ENCODE measurements at regions of chr6 and their contacts with region 1.

Region 1: DNA sequence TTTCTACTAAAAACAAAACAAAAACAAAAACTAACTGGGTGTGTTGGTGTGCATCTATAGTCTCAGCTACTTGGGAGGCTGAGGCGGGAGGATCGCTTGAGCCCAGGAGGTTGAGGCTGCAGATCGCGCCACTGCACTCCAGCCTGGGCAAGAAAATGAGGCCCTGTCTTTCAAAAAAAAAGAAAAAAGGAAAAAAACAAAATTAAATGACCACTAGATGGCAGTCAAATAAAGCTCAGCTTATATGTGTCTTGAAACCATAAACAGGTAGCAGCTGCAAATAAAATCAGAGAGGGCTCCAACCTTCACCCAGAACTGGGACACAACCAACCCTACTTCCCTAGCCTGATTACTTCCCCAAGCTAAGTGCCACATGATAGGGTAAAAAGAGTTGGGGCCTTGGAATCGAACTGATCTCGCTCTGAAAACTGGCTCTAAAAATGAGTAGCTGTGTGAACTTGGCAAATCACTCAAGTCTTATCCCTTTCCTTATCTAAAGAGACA is 67.1 kb upstream of the ADGRF4 start:
- DNase-seq: peak; percentile 66
- ATAC-seq: peak; percentile 59
- H3K4me3 ChIP-seq: peak overlapping the region in 2 of 3 experiments; percentile 5 to 42; a peak in 3 of 6 replicates
- H3K27ac ChIP-seq: no peak overlapping the region
- H3K4me1 ChIP-seq: peaks cover 31% of the 10 kb centered on the region
- H3K27me3 ChIP-seq: 0 out of 5 replicates have a peak, but pooled peaks cover 0 to 4% of the 10 kb centered on the region in 2 experiments
- CTCF ChIP-seq: peak; percentile 73
- EP300 ChIP-seq: no peak
- POLR2A ChIP-seq: no peak
- RAD21 ChIP-seq: peak; percentile 68; the same call in 1 of the 2 replicates

Region 2: GRCh38 chr6:47111685-47112084 is 519.6 kb before region 1 on chr6:
- CTCF ChIA-PET with region 1: no interaction called
- POLR2A ChIA-PET with region 1: no interaction called
- in situ Hi-C with region 1: no loop called
- intact Hi-C with region 1: no loop called
- DNase-seq: peak; percentile 93
- ATAC-seq: peak; percentile 79
- H3K4me3 ChIP-seq: peak overlapping the region in 1 of 3 experiments; percentile 15; a peak in 1 of 6 replicates
- H3K27ac ChIP-seq: peak overlapping the region; percentile 4
- H3K4me1 ChIP-seq: peaks cover 44% of the 10 kb centered on the region
- H3K27me3 ChIP-seq: no peaks in the 10 kb centered on the region
- CTCF ChIP-seq: no peak
- EP300 ChIP-seq: peak in 1 of 2 experiments; percentile 54; a peak in 1 of 4 replicates
- POLR2A ChIP-seq: no peak
- RAD21 ChIP-seq: no peak

Region 3: DNA sequence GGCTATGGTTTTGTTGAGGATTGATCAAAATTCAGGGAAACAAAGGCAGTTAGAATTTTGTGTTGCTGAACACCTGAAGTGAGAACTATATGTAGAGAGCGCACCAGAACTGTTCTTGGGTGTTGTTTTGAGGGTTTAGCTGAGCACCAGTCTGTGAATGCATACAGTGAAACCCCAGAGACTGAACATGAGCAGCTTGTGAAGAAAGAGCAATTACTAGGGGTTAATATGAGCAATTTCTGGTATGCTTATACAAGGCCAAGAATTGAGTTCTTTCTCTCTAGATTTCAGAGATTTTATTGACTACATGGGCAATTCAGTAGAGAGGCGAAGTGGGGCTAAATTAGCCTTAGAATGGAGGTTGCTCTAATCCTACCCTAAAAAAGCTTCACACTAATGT is 59.8 kb before region 1 on chr6:
- CTCF ChIA-PET with region 1: no interaction called
- POLR2A ChIA-PET with region 1: no interaction called
- in situ Hi-C with region 1: no loop called
- intact Hi-C with region 1: no loop called
- DNase-seq: no peak
- ATAC-seq: no peak
- H3K4me3 ChIP-seq: no peak overlapping the region
- H3K27ac ChIP-seq: no peak overlapping the region
- H3K4me1 ChIP-seq: no peaks in the 10 kb centered on the region
- H3K27me3 ChIP-seq: no peaks in the 10 kb centered on the region
- CTCF ChIP-seq: no peak
- EP300 ChIP-seq: no peak
- POLR2A ChIP-seq: no peak
- RAD21 ChIP-seq: no peak

Region 4: GRCh38 chr6:47733879-47734558 is 102.7 kb after region 1 on chr6:
- CTCF ChIA-PET with region 1: interaction called, 13 read pairs
- POLR2A ChIA-PET with region 1: no interaction called
- in situ Hi-C with region 1: no loop called
- intact Hi-C with region 1: loop called (anchors 1 kb)
- DNase-seq: peak; percentile 28
- ATAC-seq: peak; percentile 73
- H3K4me3 ChIP-seq: no peak overlapping the region
- H3K27ac ChIP-seq: no peak overlapping the region
- H3K4me1 ChIP-seq: no peaks in the 10 kb centered on the region
- H3K27me3 ChIP-seq: no peaks in the 10 kb centered on the region
- CTCF ChIP-seq: peak; percentile 59
- EP300 ChIP-seq: no peak
- POLR2A ChIP-seq: no peak
- RAD21 ChIP-seq: no peak

Region 5: GRCh38 chr6:47780510-47781356 is 149.4 kb after region 1 on chr6:
- CTCF ChIA-PET with region 1: interaction called, 37 read pairs
- POLR2A ChIA-PET with region 1: no interaction called
- in situ Hi-C with region 1: loop called (anchors 5 kb)
- intact Hi-C with region 1: loop called (anchors 1 kb)
- DNase-seq: peak; percentile 62
- ATAC-seq: peak; percentile 98
- H3K4me3 ChIP-seq: no peak overlapping the region
- H3K27ac ChIP-seq: no peak overlapping the region
- H3K4me1 ChIP-seq: no peaks in the 10 kb centered on the region
- H3K27me3 ChIP-seq: peaks cover 0 to 6% of the 10 kb centered on the region in 2 experiments; a peak in 1 of 5 replicates
- CTCF ChIP-seq: peak; percentile 82
- EP300 ChIP-seq: no peak
- POLR2A ChIP-seq: no peak
- RAD21 ChIP-seq: peak; percentile 50

Region 6: DNA sequence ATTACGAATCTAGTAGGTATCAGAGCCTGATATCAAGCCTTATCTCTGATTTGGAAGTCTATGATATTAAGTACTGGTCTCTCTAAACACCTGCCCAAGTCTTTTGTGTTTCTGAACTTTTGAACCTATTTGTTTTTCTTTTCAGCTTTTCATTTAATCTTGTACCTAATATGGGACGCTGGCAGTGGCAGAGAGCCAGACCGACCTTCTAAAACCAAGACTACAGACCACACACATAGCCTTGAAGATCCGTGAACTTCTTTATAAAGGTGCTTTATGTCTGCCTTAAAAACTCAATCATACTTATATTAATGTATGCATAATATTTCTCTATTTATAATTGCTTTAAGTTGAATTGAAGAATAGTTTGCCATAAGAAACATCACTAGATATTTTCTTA is 492.3 kb after region 1 on chr6:
- CTCF ChIA-PET with region 1: no interaction called
- POLR2A ChIA-PET with region 1: no interaction called
- in situ Hi-C with region 1: no loop called
- intact Hi-C with region 1: no loop called
- DNase-seq: no peak
- ATAC-seq: no peak
- H3K4me3 ChIP-seq: no peak overlapping the region
- H3K27ac ChIP-seq: no peak overlapping the region
- H3K4me1 ChIP-seq: no peaks in the 10 kb centered on the region
- H3K27me3 ChIP-seq: no peaks in the 10 kb centered on the region; a peak in 1 of 5 replicates
- CTCF ChIP-seq: no peak
- EP300 ChIP-seq: no peak
- POLR2A ChIP-seq: no peak
- RAD21 ChIP-seq: no peak

Region 7: DNA sequence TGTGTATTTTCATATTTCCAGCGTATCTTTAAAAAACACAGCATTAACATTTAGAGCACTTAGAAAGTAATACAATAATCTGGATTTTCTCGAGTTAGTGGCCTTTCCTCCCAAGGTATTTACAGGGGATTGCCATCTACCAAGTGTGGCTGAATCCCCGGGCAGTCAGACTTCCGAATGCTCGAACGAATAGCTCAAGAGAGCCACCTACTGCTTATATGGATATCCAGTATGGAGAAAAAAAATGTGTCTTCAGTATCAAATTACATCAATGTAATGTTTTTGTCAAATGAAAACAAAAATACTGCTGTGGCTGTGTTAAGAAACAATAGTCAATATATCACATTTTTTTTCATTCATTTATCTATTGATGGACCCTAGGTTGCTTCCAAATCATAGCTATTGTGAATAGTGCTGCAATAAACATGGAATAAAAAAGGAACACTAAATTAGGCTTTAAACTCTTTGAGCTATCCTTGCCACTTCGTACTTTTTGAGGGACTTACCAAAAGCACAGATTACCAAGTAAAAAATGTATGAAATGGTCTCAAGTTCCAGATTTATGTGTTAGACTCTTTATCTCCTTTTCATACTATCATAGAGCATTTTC is 1134.1 kb after region 1 on chr6:
- CTCF ChIA-PET with region 1: no interaction called
- POLR2A ChIA-PET with region 1: no interaction called
- in situ Hi-C with region 1: no loop called
- intact Hi-C with region 1: loop called (anchors 2 kb)
- DNase-seq: peak; percentile 46
- ATAC-seq: peak; percentile 93
- H3K4me3 ChIP-seq: no peak overlapping the region
- H3K27ac ChIP-seq: no peak overlapping the region
- H3K4me1 ChIP-seq: no peaks in the 10 kb centered on the region
- H3K27me3 ChIP-seq: no peaks in the 10 kb centered on the region
- CTCF ChIP-seq: peak; percentile 73
- EP300 ChIP-seq: no peak
- POLR2A ChIP-seq: no peak
- RAD21 ChIP-seq: peak; percentile 62

Region 8: GRCh38 chr6:49409951-49410542 is 1778.7 kb after region 1 on chr6:
- CTCF ChIA-PET with region 1: no interaction called
- POLR2A ChIA-PET with region 1: no interaction called
- in situ Hi-C with region 1: no loop called
- intact Hi-C with region 1: loop called (anchors 10 kb)
- DNase-seq: peak; percentile 59
- ATAC-seq: peak; percentile 97
- H3K4me3 ChIP-seq: no peak overlapping the region
- H3K27ac ChIP-seq: no peak overlapping the region
- H3K4me1 ChIP-seq: no peaks in the 10 kb centered on the region
- H3K27me3 ChIP-seq: no peaks in the 10 kb centered on the region
- CTCF ChIP-seq: peak; percentile 85
- EP300 ChIP-seq: no peak
- POLR2A ChIP-seq: no peak
- RAD21 ChIP-seq: no peak